ENCODE measurements at regions of chr5 and their contacts with region 1.

Region 1: GRCh38 chr5:138789771-138790242 is 36.6 kb downstream of the CTNNA1 start:
- DNase-seq: peak; percentile 48 to 54
- ATAC-seq: peak; percentile 87 to 88; a peak in 5 of 6 replicates
- H3K4me3 ChIP-seq: no peak overlapping the region
- H3K27ac ChIP-seq: no peak overlapping the region
- H3K4me1 ChIP-seq: peaks cover 13% of the 10 kb centered on the region
- CTCF ChIP-seq: peak; percentile 64
- EP300 ChIP-seq: no peak
- POLR2A ChIP-seq: no peak
- RAD21 ChIP-seq: peak; percentile 28 to 34; a peak in 1 of 5 replicates

Region 2: DNA sequence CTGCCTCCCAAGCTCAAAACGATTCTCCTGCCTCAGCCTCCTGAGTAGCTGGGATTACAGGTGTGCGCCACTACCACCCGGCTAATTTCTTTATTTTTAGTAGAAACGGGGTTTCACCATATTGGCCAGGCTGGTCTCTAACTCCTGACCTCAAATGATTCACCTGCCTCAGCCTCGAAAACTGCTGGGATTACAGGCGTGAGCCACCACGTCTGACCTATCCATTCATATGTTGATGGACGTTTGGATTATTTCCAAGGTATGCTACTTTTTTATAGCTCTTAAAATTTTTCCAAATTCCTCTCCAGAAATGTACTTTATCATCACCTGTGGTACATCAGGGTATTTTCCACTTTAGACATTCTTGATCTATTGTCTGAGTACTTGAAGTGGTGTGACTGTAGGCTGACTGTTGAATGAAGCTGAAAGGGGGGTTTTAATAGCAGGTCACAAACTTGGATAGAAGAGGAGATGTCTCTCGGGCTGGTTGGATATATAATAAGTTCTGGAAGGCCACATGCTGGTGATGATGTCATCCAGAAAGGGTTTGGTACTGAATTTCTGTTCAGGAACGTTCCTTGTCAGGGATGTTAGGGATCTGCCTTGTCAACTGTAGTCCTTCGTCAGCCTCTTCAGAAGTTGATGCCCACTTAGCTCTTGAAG is 29.2 kb before region 1 on chr5:
- CTCF ChIA-PET with region 1: interaction called, 14 read pairs
- POLR2A ChIA-PET with region 1: no interaction called
- DNase-seq: no peak
- ATAC-seq: peak in 1 of 2 experiments; percentile 22; a peak in 1 of 6 replicates
- H3K4me3 ChIP-seq: no peak overlapping the region
- H3K27ac ChIP-seq: no peak overlapping the region
- H3K4me1 ChIP-seq: peaks cover 52% of the 10 kb centered on the region
- CTCF ChIP-seq: no peak
- EP300 ChIP-seq: no peak
- POLR2A ChIP-seq: no peak
- RAD21 ChIP-seq: no peak

Region 3: GRCh38 chr5:138819081-138819480 is 29.3 kb after region 1 on chr5:
- CTCF ChIA-PET with region 1: interaction called, 13 read pairs
- POLR2A ChIA-PET with region 1: no interaction called
- DNase-seq: no peak
- ATAC-seq: no peak; a peak in 1 of 6 replicates
- H3K4me3 ChIP-seq: no peak overlapping the region
- H3K27ac ChIP-seq: no peak overlapping the region
- H3K4me1 ChIP-seq: no peaks in the 10 kb centered on the region
- CTCF ChIP-seq: no peak
- EP300 ChIP-seq: no peak
- POLR2A ChIP-seq: no peak
- RAD21 ChIP-seq: no peak

Region 4: GRCh38 chr5:138824924-138825863 is 35.4 kb after region 1 on chr5:
- CTCF ChIA-PET with region 1: interaction called, 11 read pairs
- POLR2A ChIA-PET with region 1: no interaction called
- DNase-seq: peak; percentile 11 to 33
- ATAC-seq: peak; percentile 83 to 85
- H3K4me3 ChIP-seq: no peak overlapping the region
- H3K27ac ChIP-seq: no peak overlapping the region
- H3K4me1 ChIP-seq: no peaks in the 10 kb centered on the region
- CTCF ChIP-seq: peak; percentile 70
- EP300 ChIP-seq: no peak
- POLR2A ChIP-seq: no peak
- RAD21 ChIP-seq: peak; percentile 54 to 57

Measured in A549 (cell line).